Breast epithelium (tissue), 4 donors: ENCODE measurements at regions of chr14 and their contacts with region 1.

Region 1: DNA sequence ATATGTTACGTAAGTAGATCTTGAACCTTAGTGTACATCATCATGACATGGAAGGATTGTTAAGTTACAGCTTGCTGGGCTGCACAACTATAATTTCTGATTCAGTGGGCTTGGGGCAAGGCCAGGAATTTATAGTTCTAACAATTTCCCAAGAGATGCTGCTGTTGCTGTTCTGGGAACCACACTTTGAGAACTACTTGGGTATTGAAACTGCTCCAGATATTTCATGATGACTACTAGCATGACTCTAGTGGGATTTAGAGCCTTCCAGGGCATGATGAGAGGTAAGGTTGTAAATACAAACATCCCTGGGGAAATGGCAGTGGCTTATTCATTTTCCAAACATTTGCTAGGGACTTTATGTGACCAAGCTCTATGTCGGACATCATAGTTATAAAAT is 904.8 kb upstream of the SEL1L start:
- DNase-seq: no peak
- H3K4me3 ChIP-seq: no peak overlapping the region
- H3K27ac ChIP-seq: no peak overlapping the region
- H3K4me1 ChIP-seq: no peaks in the 10 kb centered on the region
- H3K27me3 ChIP-seq: no peaks in the 10 kb centered on the region
- CTCF ChIP-seq: no peak
- POLR2A ChIP-seq: no peak

Region 2: GRCh38 chr14:82528016-82528415 is 89.6 kb after region 1 on chr14:
- intact Hi-C with region 1: no loop called
- DNase-seq: no peak
- H3K4me3 ChIP-seq: no peak overlapping the region
- H3K27ac ChIP-seq: no peak overlapping the region
- H3K4me1 ChIP-seq: no peaks in the 10 kb centered on the region
- H3K27me3 ChIP-seq: no peaks in the 10 kb centered on the region
- CTCF ChIP-seq: no peak
- POLR2A ChIP-seq: no peak

Region 3: DNA sequence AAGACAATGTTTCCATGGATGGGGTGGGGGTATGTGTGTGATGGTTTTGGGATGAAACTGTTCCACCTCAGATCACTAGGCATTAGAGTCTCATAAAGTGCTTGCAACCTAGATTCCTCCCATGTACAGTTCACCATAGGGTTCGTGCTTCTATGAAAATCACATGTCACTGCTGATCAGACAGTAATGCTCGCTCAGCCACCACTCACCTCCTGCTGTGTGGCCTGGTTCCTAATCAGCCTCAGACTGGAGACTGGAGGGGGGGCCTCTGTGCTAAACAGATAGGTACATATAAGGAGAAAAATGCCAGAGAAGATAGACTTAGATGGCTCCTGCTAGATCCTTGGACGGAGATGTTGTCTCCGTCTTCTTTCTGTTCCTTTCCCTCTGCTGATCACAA is 392.2 kb after region 1 on chr14:
- intact Hi-C with region 1: loop called (anchors 5 kb)
- DNase-seq: no peak
- H3K4me3 ChIP-seq: no peak overlapping the region
- H3K27ac ChIP-seq: no peak overlapping the region
- H3K4me1 ChIP-seq: no peaks in the 10 kb centered on the region
- H3K27me3 ChIP-seq: no peaks in the 10 kb centered on the region
- CTCF ChIP-seq: no peak
- POLR2A ChIP-seq: no peak